B cell (primary cell): ENCODE measurements at regions of chr17 and their contacts with region 1.

Region 1: DNA sequence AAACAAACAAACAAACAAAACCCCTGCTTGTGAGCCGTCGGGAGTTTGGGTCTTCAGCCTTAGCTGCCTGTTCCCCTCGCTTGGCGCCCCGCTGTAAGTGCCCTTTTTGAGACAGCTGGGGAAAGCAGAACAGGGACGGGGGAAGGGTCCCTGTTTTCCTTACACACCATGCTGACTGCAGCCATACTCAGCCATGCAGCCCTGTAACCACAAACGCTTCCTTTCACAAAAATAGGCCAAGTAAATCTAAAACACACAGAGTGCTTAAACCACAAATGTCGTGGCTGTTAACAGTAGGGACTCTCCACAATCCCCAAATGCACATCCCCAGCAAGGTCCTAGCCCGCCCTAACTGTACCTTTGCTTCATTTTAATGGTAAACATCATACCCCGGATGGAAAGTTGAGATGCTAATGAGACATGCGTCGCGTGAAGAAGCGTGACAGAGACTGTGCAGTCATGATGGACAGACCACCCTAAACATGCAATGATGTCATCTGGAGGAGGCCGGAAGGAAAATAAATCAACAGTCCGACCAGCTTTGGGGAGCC is 129.9 kb downstream of the MGAT5B start:
- DNase-seq: peak; percentile 78
- ATAC-seq: peak; percentile 87
- H3K4me3 ChIP-seq: peak overlapping the region in 3 of 5 experiments; percentile 9 to 41 (median 30)
- H3K4me3 Mint-ChIP-seq: peak overlapping the region; percentile 74
- H3K27ac ChIP-seq: peak overlapping the region in 1 of 2 donors; percentile 52
- H3K27ac Mint-ChIP-seq: peak overlapping the region; percentile 84
- H3K4me1 ChIP-seq: peaks cover 30 to 41% of the 10 kb centered on the region in 2 donors
- H3K4me1 Mint-ChIP-seq: peaks cover 47% of the 10 kb centered on the region
- H3K27me3 ChIP-seq: no peaks in the 10 kb centered on the region
- H3K27me3 Mint-ChIP-seq: peaks cover 13% of the 10 kb centered on the region
- CTCF ChIP-seq: no peak

Region 2: DNA sequence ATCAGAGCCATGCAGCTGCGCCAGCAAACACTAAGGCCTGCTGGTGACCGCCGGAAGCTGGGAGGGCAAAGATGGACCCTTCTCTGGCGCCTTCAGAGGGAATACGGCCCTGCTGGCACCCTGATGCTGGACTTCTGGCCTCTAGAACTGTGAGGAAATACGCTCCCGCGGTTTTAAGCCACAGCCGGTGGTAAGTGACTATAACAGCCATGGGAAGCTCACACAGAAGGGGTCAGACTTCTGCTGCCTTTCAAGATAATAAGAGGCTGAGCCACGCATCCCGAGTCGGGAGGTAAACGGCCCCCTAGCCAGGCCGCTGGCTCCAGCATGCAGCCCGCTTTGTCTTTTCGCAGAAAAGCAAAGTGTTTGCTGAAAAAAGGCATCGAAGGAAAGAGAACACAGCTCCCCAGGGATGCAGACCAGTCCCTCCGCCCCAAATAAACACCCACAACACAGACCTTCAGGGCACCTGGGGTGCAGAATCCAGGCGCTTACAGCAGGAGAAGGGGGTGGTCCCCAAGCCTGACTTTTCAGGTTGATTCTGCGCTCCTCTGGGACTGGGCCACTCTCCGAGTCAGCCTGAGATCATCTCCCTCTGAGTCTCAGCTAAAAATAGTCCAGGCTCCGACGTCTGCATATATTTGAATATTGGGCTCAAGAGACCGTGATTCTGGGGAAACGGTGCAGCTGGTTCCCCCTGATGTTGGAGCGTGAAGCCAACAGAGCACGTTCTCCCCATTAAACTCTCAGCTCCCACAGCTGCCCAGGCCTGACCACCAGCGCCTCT is 40.2 kb before region 1 on chr17:
- CTCF ChIA-PET with region 1: interaction called, 3 read pairs
- POLR2A ChIA-PET with region 1: interaction called, 4 read pairs
- intact Hi-C with region 1: loop called (anchors 1 kb)
- DNase-seq: peak; percentile 82
- ATAC-seq: peak; percentile 83
- H3K4me3 ChIP-seq: peak overlapping the region in 4 of 5 experiments; percentile 16 to 46 (median 38)
- H3K4me3 Mint-ChIP-seq: peak overlapping the region; percentile 88
- H3K27ac ChIP-seq: peak overlapping the region in 1 of 2 donors; percentile 65
- H3K27ac Mint-ChIP-seq: peak overlapping the region; percentile 86
- H3K4me1 ChIP-seq: peaks cover 31 to 32% of the 10 kb centered on the region in 2 donors
- H3K4me1 Mint-ChIP-seq: peaks cover 37% of the 10 kb centered on the region
- H3K27me3 ChIP-seq: peaks cover 0 to 10% (median 4%) of the 10 kb centered on the region in 4 experiments
- H3K27me3 Mint-ChIP-seq: peaks cover 10% of the 10 kb centered on the region
- CTCF ChIP-seq: no peak

Region 3: DNA sequence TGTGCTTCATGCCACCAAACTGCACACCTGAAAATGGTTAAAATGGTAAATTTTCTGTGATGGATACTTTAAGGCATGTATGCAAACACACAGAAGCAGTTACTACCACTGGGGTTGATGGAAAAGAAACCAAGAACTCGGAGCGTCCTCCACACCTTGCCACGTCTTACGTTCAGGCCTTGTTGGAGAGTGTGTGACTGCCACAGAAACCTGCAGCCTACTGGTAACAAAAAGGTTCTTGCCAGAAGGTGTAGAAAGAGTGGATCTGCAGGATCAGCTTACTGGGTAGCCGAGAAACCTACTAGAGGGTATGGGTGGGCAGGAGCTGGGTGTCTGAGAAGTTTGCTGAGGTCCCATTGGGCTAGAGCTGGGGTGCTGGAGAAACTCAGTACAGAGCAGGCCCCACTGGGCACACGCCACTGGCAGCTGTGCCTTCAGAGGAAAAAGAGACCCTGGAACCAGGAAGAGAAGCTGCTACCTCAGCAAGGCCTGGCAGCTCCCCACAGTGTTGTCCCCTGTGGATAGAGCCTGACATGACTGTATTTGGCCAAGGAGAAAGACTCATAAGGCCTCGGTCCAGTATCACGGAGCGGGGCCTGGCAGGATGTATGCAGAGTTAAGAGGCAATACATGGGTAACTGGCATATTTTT is 347.3 kb after region 1 on chr17:
- CTCF ChIA-PET with region 1: no interaction called
- POLR2A ChIA-PET with region 1: no interaction called
- intact Hi-C with region 1: no loop called
- DNase-seq: no peak
- ATAC-seq: no peak
- H3K4me3 ChIP-seq: no peak overlapping the region
- H3K4me3 Mint-ChIP-seq: no peak overlapping the region
- H3K27ac ChIP-seq: no peak overlapping the region
- H3K27ac Mint-ChIP-seq: no peak overlapping the region
- H3K4me1 ChIP-seq: peaks cover 24 to 27% of the 10 kb centered on the region in 2 donors
- H3K4me1 Mint-ChIP-seq: peaks cover 29% of the 10 kb centered on the region
- H3K27me3 ChIP-seq: no peaks in the 10 kb centered on the region
- H3K27me3 Mint-ChIP-seq: no peaks in the 10 kb centered on the region
- CTCF ChIP-seq: no peak